Activated CD4-positive, alpha-beta T cell treated with anti-CD3 and anti-CD28 coated beads for 36 hours (primary cell): ENCODE measurements at regions of chr19 and their contacts with region 1.

Region 1: GRCh38 chr19:45862564-45863334 is at the start of gene SYMPK:
- DNase-seq: peak; percentile 100
- ATAC-seq: peak; percentile 96
- H3K4me3 Mint-ChIP-seq: peak within 1 kb of the TSS; percentile 87
- H3K27ac Mint-ChIP-seq: peak within 1 kb of the TSS; percentile 95
- H3K4me1 Mint-ChIP-seq: peaks cover 31% of the 10 kb centered on the region
- H3K27me3 Mint-ChIP-seq: peaks cover 17% of the 10 kb centered on the region
- total RNA-seq, gene SYMPK: 108 to 128 TPM

Region 2: DNA sequence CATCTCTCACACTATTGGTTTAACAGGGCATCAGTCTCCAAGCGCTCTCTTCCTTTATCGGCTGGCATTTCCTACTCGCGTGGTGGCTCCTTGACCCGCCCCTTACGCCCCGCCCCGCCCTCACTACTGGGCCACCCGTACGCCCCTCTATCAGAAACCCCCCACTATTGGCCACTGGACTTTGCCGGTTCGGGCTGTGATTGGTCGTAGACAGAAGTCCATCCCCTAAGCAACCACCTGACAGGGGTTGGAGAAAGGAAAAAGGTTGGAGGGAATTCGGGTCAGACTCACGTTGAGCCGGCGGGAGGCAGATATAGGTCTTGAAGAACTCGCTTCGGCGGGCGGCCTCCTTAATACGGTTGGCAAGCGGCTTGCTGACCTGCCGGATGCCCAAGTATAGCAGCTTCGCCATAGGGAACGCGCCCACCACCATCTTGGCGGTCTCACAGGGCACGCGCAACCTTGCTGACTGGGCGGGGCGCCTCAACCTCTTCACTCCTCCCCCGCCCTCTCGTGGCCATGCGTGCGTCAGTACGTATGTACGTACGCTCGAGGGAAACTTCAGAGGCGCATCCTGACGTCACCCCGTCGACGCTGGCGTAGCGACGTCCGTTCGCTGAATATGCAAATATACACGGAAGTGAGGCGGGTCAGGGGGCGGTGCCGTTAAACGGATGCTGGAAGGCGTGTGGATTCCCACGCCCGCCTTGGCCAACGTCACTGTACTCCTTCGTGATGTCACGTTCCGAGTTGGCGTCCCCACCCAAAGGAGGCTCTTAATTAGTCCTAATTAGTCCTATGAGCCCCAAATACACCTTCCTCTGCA is 278.2 kb before region 1 on chr19 and contains the start of gene OPA3:
- CTCF ChIA-PET with region 1: no interaction called
- POLR2A ChIA-PET with region 1: no interaction called
- intact Hi-C with region 1: loop called in 1 of 2 experiments (anchors 1 kb)
- DNase-seq: peak; percentile 100
- ATAC-seq: peak; percentile 95
- H3K4me3 Mint-ChIP-seq: peak within 1 kb of the TSS; percentile 87
- H3K27ac Mint-ChIP-seq: peak within 1 kb of the TSS; percentile 93
- H3K4me1 Mint-ChIP-seq: peaks cover 22% of the 10 kb centered on the region
- H3K27me3 Mint-ChIP-seq: peaks cover 2% of the 10 kb centered on the region
- total RNA-seq, gene OPA3: 13.8 to 14.4 TPM

Region 3: GRCh38 chr19:45770192-45771101 is 92.3 kb before region 1 on chr19:
- CTCF ChIA-PET with region 1: interaction called, 7 read pairs
- POLR2A ChIA-PET with region 1: no interaction called
- intact Hi-C with region 1: loop called in 1 of 2 experiments (anchors 1 kb)
- DNase-seq: peak; percentile 93
- ATAC-seq: peak; percentile 68
- H3K4me3 Mint-ChIP-seq: peak overlapping the region; percentile 78
- H3K27ac Mint-ChIP-seq: no peak overlapping the region
- H3K4me1 Mint-ChIP-seq: peaks cover 10% of the 10 kb centered on the region
- H3K27me3 Mint-ChIP-seq: peaks cover 10% of the 10 kb centered on the region

Region 4: GRCh38 chr19:45876411-45877197 is 13.9 kb after region 1 on chr19:
- CTCF ChIA-PET with region 1: interaction called, 84 read pairs
- POLR2A ChIA-PET with region 1: interaction called, 5 read pairs
- intact Hi-C with region 1: loop called in 1 of 2 experiments (anchors 1 kb)
- DNase-seq: peak; percentile 82
- ATAC-seq: peak; percentile 34
- H3K4me3 Mint-ChIP-seq: peak overlapping the region; percentile 7
- H3K27ac Mint-ChIP-seq: peak overlapping the region; percentile 33
- H3K4me1 Mint-ChIP-seq: peaks cover 29% of the 10 kb centered on the region
- H3K27me3 Mint-ChIP-seq: peaks cover 21% of the 10 kb centered on the region

Region 5: GRCh38 chr19:45994989-45995714 is 132.4 kb after region 1 on chr19 and contains the start of gene CCDC61:
- CTCF ChIA-PET with region 1: interaction called, 5 read pairs
- POLR2A ChIA-PET with region 1: interaction called, 3 read pairs
- intact Hi-C with region 1: loop called (anchors 1 kb)
- DNase-seq: peak; percentile 96
- ATAC-seq: peak; percentile 98
- H3K4me3 Mint-ChIP-seq: no peak within 1 kb of the TSS
- H3K27ac Mint-ChIP-seq: no peak within 1 kb of the TSS
- H3K4me1 Mint-ChIP-seq: peaks cover 22% of the 10 kb centered on the region
- H3K27me3 Mint-ChIP-seq: peaks cover 7% of the 10 kb centered on the region
- total RNA-seq, gene CCDC61: 22.4 to 26.2 TPM

Region 6: GRCh38 chr19:46009530-46010510 is 147.1 kb after region 1 on chr19:
- CTCF ChIA-PET with region 1: no interaction called
- POLR2A ChIA-PET with region 1: no interaction called
- intact Hi-C with region 1: no loop called
- DNase-seq: peak; percentile 80
- ATAC-seq: peak; percentile 88
- H3K4me3 Mint-ChIP-seq: no peak overlapping the region
- H3K27ac Mint-ChIP-seq: no peak overlapping the region
- H3K4me1 Mint-ChIP-seq: peaks cover 5% of the 10 kb centered on the region
- H3K27me3 Mint-ChIP-seq: peaks cover 6% of the 10 kb centered on the region

Region 7: DNA sequence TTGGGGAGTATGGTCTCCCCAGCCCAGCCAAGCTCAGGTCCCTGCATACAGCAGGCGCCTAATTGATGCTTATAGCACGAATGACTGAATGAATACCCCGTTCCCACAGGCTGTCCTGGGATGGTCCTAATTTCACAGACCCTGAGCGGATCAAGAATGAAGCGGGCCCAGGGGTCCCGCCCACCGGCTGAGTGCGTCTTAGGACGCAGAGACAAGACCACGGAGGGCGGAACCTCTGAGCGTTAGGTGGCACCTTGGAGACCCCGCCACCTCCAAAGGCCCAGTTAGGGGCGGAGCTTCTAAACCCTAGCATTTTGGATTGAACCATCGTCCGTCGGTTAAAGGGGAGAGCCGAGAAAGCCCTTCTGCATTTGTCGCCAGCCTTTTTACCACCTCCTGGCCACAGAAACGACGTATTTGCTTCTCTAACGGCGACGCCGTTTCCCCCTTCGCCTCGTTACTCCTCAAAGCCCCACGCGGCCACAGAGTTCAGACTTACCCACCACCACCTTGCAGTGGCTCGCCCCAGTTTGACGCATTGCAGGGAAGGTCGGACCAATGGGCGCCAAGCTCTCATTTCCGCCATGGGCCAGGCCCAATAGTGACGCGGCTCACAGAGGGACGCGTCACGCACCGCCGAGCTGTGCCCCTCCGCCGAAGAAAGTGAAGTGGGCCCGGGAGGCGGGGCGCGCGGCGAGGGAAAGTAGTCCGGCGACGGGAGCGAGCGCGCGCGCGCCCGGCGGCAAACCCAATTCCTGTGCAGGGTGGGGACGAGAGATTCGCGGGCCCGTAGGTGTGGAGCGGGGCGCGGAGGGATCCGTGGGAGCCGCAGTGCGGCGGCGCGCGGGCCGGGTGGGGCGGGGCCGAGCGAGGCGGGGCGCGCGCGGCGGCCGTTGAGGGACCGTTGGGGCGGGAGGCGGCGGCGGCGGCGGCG is 737.9 kb after region 1 on chr19:
- CTCF ChIA-PET with region 1: no interaction called
- POLR2A ChIA-PET with region 1: no interaction called
- intact Hi-C with region 1: loop called in 1 of 2 experiments (anchors 2 kb)
- DNase-seq: peak; percentile 99
- ATAC-seq: peak; percentile 86
- H3K4me3 Mint-ChIP-seq: peak overlapping the region; percentile 84
- H3K27ac Mint-ChIP-seq: peak overlapping the region; percentile 100
- H3K4me1 Mint-ChIP-seq: peaks cover 33% of the 10 kb centered on the region
- H3K27me3 Mint-ChIP-seq: no peaks in the 10 kb centered on the region